ENCODE measurements at regions of chr1 and their contacts with region 1.

Region 1: GRCh38 chr1:231045286-231045685 is 5.2 kb upstream of the FAM89A start:
- DNase-seq: no peak
- ATAC-seq: no peak
- H3K4me3 ChIP-seq: no peak overlapping the region
- H3K27ac ChIP-seq: peak overlapping the region; percentile 80
- H3K4me1 ChIP-seq: peaks cover 14 to 47% of the 10 kb centered on the region in 2 experiments
- H3K27me3 ChIP-seq: no peaks in the 10 kb centered on the region
- CTCF ChIP-seq: no peak; a peak in 2 of 6 replicates
- EP300 ChIP-seq: no peak
- POLR2A ChIP-seq: no peak
- RAD21 ChIP-seq: no peak

Region 2: DNA sequence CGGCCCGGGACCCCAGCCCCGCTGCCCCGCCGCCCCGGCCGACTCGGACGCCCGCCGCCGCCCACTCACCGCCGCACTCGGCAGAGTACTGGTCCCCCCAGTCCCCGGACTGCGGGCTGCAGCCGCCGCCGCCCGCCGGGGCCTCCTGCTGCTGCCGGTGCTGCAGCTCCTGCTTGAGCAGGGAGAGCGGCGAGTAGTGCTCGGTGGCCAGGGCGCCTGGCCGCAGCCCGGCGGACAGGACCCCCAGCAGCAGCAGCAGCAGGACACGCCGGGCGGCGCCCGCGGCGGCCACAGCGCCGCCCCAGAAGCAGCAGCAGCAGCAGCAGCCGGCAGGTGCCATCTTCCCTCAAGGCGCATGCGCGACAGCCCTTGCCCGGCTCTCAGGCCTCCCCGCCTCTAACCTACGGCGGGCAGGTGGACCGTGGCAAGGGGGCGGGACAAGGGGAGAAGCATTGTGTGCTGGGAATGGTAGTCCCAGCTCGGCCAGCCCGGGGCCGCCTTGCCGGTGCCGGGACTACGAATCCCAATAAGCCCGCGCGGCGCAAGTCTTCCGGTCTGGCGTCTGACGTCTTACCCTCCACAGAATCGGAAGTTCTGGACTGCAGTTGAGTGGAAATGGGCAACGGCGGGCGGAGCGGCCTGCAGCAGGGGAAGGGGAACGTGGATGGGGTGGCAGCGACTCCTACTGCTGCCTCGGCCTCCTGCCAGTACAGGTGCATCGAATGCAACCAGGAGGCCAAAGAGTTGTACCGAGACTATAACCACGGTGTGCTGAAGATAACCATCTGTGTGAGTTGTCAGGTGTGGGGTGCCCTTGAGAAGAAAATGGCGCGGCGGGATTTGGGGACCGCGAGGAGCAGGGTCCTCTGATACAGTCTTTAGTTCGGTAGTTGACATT is 66.5 kb before region 1 on chr1 and contains the starts of genes ARV1 and TTC13:
- CTCF ChIA-PET with region 1: no interaction called
- POLR2A ChIA-PET with region 1: no interaction called
- in situ Hi-C with region 1: no loop called
- intact Hi-C with region 1: loop called (anchors 2 kb)
- DNase-seq: peak; percentile 99 to 100 (median 99)
- ATAC-seq: peak; percentile 99
- H3K4me3 ChIP-seq: peak within 1 kb of the TSS; percentile 62
- H3K27ac ChIP-seq: peak within 1 kb of the TSS; percentile 75
- H3K4me1 ChIP-seq: peaks cover 21 to 40% of the 10 kb centered on the region in 2 experiments; a peak in 4 of 5 replicates
- H3K27me3 ChIP-seq: no peaks in the 10 kb centered on the region
- CTCF ChIP-seq: peak; percentile 38 to 53 (median 52); a peak in 5 of 6 replicates
- EP300 ChIP-seq: peak; percentile 33; the same call in 1 of the 2 replicates
- POLR2A ChIP-seq: peak; percentile 97
- RAD21 ChIP-seq: peak; percentile 21 to 41; a peak in 3 of 4 replicates
- polyA plus RNA-seq, gene ARV1: 61.9 to 71.0 TPM
- polyA plus RNA-seq, gene TTC13: 1.7 to 2.2 TPM

Region 3: DNA sequence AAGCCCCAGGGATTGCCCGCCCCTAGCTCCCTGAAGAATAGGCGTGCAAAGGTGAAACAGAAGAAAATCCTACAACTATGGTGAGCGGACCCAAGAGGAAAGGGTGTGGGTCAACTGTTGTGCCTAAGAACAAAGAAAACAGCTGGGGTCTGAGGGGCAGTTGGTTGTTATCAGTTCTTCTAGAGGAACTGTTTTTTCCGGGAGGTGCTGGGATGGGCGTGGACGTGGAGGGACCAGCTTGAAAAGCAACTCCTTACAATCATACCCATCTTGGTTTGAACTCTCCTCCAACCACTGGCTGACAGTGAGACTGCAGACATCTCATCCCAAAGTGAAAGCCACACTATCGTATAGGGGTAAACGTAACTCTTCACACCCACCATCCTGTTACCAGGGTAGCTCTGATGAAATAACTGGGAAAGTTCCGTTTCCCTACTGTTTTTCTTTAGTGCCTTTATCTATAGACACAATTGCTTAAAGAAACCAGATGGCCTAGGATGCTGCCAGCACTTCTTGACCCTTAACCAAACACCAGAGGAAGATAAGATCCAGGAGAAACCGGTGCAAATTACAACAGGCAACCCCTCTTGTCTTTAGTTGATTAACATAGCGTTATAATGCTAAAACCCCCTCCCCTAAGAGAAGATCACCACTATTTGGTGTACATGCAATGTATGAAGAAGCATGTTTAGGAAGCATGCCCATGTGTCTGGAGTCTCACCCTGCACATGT is 20.4 kb after region 1 on chr1:
- CTCF ChIA-PET with region 1: no interaction called
- POLR2A ChIA-PET with region 1: interaction called, 16 read pairs
- in situ Hi-C with region 1: no loop called
- intact Hi-C with region 1: loop called (anchors 1 kb)
- DNase-seq: peak; percentile 48 to 77 (median 59)
- ATAC-seq: peak; percentile 92
- H3K4me3 ChIP-seq: no peak overlapping the region
- H3K27ac ChIP-seq: peak overlapping the region; percentile 61
- H3K4me1 ChIP-seq: peaks cover 0 to 39% of the 10 kb centered on the region in 2 experiments
- H3K27me3 ChIP-seq: no peaks in the 10 kb centered on the region
- CTCF ChIP-seq: no peak
- EP300 ChIP-seq: peak; percentile 90
- POLR2A ChIP-seq: no peak
- RAD21 ChIP-seq: peak in 1 of 2 experiments; percentile 24; a peak in 1 of 4 replicates

Region 4: DNA sequence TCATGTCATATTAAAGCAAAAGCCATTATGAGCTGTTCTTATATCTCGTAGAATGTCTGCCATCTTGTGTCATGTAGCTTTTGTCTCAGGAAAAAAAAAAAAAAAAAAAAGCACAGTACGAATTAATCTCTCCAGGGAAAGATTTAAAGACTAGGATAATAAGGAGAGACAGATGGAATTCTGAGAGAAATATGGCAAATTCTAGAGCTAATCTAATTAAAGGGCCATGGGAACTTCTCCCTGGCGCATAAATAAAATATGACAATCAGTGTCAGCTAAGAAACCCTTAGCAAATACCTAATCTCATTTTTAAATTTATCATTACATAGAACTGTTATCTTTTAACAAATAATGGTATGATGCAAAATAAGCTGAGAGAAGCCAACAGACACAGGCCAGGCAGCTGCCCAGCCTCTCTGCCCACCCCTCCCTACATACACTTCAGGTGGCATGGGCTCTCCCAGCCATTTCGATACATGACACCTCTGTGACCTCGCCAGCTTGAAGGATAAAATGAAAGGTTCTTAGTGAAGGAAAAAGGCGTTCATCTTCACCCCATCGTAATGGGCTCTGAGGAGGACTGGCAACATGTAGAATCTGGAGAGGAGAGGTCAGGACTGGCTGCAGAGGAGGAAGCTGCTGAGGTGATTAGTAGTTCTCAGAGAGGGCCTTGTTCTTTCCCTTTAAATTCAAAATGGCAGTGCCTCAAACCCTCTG is 621.1 kb after region 1 on chr1:
- CTCF ChIA-PET with region 1: no interaction called
- POLR2A ChIA-PET with region 1: no interaction called
- in situ Hi-C with region 1: no loop called
- intact Hi-C with region 1: no loop called
- DNase-seq: no peak
- ATAC-seq: no peak
- H3K4me3 ChIP-seq: no peak overlapping the region
- H3K27ac ChIP-seq: no peak overlapping the region
- H3K4me1 ChIP-seq: no peaks in the 10 kb centered on the region
- H3K27me3 ChIP-seq: no peaks in the 10 kb centered on the region
- CTCF ChIP-seq: no peak
- EP300 ChIP-seq: no peak
- POLR2A ChIP-seq: no peak
- RAD21 ChIP-seq: no peak